ENCODE measurements at regions of chr5 and their contacts with region 1.

Region 1: GRCh38 chr5:41856644-41857491 is 13.4 kb downstream of the OXCT1 start:
- DNase-seq: peak; percentile 56
- H3K4me3 Mint-ChIP-seq: no peak overlapping the region
- H3K27ac Mint-ChIP-seq: no peak overlapping the region
- H3K4me1 Mint-ChIP-seq: peaks cover 35% of the 10 kb centered on the region
- H3K27me3 Mint-ChIP-seq: no peaks in the 10 kb centered on the region

Region 2: GRCh38 chr5:41587668-41588067 is 269.2 kb before region 1 on chr5:
- CTCF ChIA-PET with region 1: no interaction called
- POLR2A ChIA-PET with region 1: no interaction called
- intact Hi-C with region 1: no loop called
- DNase-seq: no peak
- H3K4me3 Mint-ChIP-seq: no peak overlapping the region
- H3K27ac Mint-ChIP-seq: no peak overlapping the region
- H3K4me1 Mint-ChIP-seq: no peaks in the 10 kb centered on the region
- H3K27me3 Mint-ChIP-seq: peaks cover 1% of the 10 kb centered on the region

Region 3: DNA sequence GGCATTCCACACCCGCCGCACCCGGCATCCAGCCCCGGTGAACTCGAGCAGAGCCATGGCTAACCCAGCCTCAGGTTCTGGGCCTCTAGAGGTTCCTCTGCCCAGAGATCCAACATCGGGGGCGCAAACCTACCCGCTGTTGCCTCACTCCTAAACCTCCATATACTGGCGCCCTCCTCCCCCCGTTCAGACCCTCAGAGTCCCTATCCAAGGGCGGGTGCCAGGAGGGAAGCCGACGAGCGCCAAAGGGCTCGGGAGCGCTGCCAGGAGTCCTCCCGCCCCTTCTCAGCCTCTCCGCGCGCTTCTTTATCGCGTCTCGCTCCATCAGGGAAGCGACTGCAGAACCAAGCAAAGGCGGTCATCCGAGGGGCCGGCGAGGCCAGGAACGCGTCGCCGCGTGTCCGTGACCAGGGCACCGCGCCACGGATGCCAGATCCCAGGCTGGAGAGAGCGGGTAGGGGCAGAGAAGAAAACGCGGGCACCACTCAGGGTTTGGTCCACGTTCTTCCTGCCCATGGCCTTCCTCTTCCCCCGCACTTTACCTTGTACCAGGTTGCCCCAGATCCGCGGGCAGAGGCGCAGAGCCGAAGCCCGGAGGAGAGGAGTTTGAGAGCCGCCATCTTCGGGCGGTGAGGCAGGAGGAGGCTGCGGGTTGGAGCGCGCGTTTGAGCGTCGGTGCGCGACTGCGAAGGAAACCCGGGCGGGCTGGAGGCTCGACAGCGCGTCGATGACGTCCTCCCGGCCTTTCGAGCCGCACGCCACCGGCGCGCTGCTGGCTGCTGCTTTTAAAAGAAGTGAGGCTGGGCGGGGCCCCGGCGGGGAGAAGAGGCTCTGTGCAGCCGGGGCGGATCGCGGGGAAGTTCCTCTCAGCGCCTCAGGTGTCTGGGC is 13.1 kb after region 1 on chr5 and contains the start of gene OXCT1:
- CTCF ChIA-PET with region 1: interaction called, 17 read pairs
- POLR2A ChIA-PET with region 1: interaction called, 3 read pairs
- intact Hi-C with region 1: loop called (anchors 1 kb)
- DNase-seq: peak; percentile 95
- H3K4me3 Mint-ChIP-seq: peak within 1 kb of the TSS; percentile 92
- H3K27ac Mint-ChIP-seq: peak within 1 kb of the TSS; percentile 87
- H3K4me1 Mint-ChIP-seq: peaks cover 56% of the 10 kb centered on the region
- H3K27me3 Mint-ChIP-seq: no peaks in the 10 kb centered on the region
- total RNA-seq, gene OXCT1: 110 to 117 TPM

Region 4: DNA sequence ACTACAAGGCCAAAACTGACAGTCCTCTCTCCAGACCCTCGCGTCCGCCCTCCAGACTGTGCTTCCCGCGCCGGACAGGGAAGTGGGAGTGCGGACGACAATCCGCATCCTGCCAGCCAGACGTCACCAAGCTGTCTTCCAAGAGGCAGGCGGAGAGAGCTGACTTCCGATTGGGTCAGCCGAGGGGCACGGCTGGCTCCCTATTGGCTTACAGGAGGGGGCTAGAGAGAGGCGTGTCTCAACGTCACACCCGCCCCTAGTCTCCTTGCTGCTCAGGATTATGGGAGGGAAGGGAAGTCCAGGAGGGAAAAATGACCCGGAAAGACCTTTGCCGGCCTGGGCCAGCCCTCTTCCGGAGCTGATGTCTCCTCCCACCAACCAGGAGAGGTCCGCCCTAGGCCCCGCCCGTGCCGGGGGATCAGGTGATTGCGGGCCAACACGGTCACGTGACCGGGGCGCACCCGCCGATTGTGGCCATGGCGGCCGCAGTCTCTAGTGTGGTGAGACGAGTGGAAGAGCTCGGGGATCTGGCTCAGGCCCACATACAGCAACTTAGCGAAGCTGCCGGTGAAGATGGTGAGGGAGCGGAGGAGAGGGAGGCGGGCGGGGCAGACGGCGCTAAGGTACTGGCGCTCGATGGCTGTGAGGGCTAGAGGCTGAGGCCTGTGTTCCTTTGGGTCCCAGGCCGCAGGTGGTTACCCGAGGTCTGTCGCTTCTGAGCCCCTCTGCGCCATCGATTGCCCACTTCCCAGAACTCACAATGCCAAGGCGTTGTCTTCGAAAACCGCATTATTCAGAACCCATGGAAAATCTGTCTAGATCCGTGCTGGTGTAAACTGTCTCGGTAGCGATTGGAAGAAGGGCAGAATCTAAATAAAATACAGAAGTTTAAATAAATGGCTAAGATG is 47.3 kb after region 1 on chr5 and contains the start of gene RIMOC1:
- CTCF ChIA-PET with region 1: interaction called, 13 read pairs
- POLR2A ChIA-PET with region 1: no interaction called
- intact Hi-C with region 1: no loop called
- DNase-seq: peak; percentile 99
- H3K4me3 Mint-ChIP-seq: peak within 1 kb of the TSS; percentile 91
- H3K27ac Mint-ChIP-seq: peak within 1 kb of the TSS; percentile 93
- H3K4me1 Mint-ChIP-seq: peaks cover 37% of the 10 kb centered on the region
- H3K27me3 Mint-ChIP-seq: peaks cover 2% of the 10 kb centered on the region
- total RNA-seq, gene RIMOC1: 25.0 to 25.8 TPM

Region 5: GRCh38 chr5:42005561-42006153 is 148.8 kb after region 1 on chr5:
- CTCF ChIA-PET with region 1: interaction called, 4 read pairs
- POLR2A ChIA-PET with region 1: no interaction called
- intact Hi-C with region 1: loop called (anchors 1 kb)
- DNase-seq: no peak
- H3K4me3 Mint-ChIP-seq: no peak overlapping the region
- H3K27ac Mint-ChIP-seq: no peak overlapping the region
- H3K4me1 Mint-ChIP-seq: no peaks in the 10 kb centered on the region
- H3K27me3 Mint-ChIP-seq: peaks cover 3% of the 10 kb centered on the region

Measured in activated CD4-positive, alpha-beta memory T cell treated with anti-CD3 and anti-CD28 coated beads for 36 hours (primary cell).